HCT116 (cell line): ENCODE measurements at regions of chr15 and their contacts with region 1.

Region 1: DNA sequence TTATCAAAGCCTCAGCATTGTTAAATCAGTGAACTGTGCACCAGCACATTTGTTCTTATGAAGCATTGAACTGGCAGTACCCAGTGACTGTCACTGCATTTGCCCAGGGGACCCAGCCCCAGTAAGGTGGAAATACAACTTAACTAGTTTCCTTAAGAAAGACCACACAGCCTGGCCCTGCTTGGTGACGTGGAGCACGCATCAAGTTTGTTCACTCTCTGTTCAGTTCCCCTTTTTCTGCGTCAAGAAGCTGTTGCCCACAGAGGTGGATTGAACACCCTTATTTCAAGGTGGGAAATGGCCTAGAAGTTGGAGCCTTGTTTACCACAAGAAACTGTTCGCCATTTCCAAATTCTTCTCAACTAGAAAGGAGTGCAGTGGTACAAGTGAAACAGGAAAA is 69.9 kb upstream of the AGBL1 start:
- DNase-seq: no peak
- ATAC-seq: no peak
- H3K4me3 ChIP-seq: no peak overlapping the region
- H3K27ac ChIP-seq: no peak overlapping the region
- H3K4me1 ChIP-seq: no peaks in the 10 kb centered on the region
- H3K27me3 ChIP-seq: no peaks in the 10 kb centered on the region
- CTCF ChIP-seq: no peak
- POLR2A ChIP-seq: no peak
- RAD21 ChIP-seq: no peak

Region 2: GRCh38 chr15:85955501-85956391 is 54.0 kb before region 1 on chr15:
- CTCF ChIA-PET with region 1: no interaction called
- POLR2A ChIA-PET with region 1: no interaction called
- RAD21 ChIA-PET with region 1: no interaction called
- intact Hi-C with region 1: loop called (anchors 5 kb)
- DNase-seq: no peak
- ATAC-seq: no peak
- H3K4me3 ChIP-seq: no peak overlapping the region
- H3K27ac ChIP-seq: no peak overlapping the region
- H3K4me1 ChIP-seq: no peaks in the 10 kb centered on the region
- H3K27me3 ChIP-seq: peaks cover 6% of the 10 kb centered on the region; the same call in 1 of the 2 replicates
- CTCF ChIP-seq: no peak
- POLR2A ChIP-seq: no peak
- RAD21 ChIP-seq: no peak

Region 3: DNA sequence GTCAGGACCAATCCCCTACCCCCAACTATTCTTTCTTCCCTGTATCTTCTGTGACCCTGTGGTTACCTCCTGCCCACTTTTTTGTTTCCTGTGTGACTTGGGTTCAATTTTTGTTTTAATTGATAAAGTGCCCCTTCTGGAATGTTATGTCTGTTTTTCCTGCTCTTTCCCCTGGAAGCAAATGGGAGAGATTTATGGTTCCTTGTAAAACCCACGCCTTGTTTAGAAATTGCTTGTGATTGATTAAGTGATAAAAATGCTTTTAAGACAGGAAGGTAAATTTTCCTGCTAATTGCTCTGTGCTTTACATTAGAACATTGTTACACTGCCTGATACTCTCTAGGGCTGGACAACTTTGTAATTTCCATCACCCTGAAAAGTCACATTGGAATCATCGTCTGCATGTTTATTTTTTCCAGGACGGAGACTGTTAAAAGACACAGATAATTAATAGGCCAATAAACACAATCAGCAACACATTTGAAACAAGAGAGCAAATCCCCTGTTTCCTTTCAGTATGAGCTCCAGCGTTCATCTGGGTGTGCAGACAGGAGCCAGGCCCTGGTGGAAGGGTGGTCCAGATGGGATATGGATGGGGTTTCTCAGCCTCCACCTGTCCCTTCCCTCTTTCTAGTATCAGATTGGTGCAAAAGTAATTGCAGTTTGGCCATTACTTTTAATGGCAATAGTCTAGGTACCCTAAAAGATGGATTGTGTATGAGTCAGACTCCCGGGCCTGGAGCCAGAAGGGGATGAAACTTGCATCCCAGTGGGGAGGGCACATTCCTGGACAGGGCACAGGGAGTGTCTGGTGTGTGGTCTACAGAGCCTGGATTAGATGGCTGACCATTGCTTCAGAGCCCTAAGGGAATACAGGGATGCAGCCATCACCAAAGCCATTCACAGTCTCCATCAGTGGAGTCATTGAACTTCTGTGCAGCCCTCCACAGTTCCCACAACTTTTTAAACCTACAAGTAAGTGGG is 11.8 kb after region 1 on chr15:
- CTCF ChIA-PET with region 1: no interaction called
- POLR2A ChIA-PET with region 1: no interaction called
- RAD21 ChIA-PET with region 1: no interaction called
- intact Hi-C with region 1: no loop called
- DNase-seq: no peak
- ATAC-seq: peak; percentile 58; the same call in 1 of the 2 replicates
- H3K4me3 ChIP-seq: no peak overlapping the region
- H3K27ac ChIP-seq: no peak overlapping the region
- H3K4me1 ChIP-seq: no peaks in the 10 kb centered on the region
- H3K27me3 ChIP-seq: no peaks in the 10 kb centered on the region
- CTCF ChIP-seq: no peak
- POLR2A ChIP-seq: no peak
- RAD21 ChIP-seq: no peak